K562 (cell line): ENCODE measurements at regions of chr12 and their contacts with region 1.

Region 1: GRCh38 chr12:102169922-102170621 is 27.6 kb downstream of the PMCH start:
- DNase-seq: peak; percentile 11 to 52 (median 26)
- ATAC-seq: peak; percentile 87
- H3K4me3 ChIP-seq: no peak overlapping the region
- H3K27ac ChIP-seq: no peak overlapping the region
- H3K4me1 ChIP-seq: peaks cover 0 to 9% of the 10 kb centered on the region in 2 experiments; a peak in 3 of 5 replicates
- H3K27me3 ChIP-seq: no peaks in the 10 kb centered on the region
- CTCF ChIP-seq: peak; percentile 43 to 78 (median 63); a peak in 4 of 6 replicates
- EP300 ChIP-seq: no peak
- POLR2A ChIP-seq: no peak
- RAD21 ChIP-seq: peak; percentile 81 to 84

Region 2: GRCh38 chr12:102300824-102301461 is 130.9 kb after region 1 on chr12:
- CTCF ChIA-PET with region 1: no interaction called
- POLR2A ChIA-PET with region 1: no interaction called
- in situ Hi-C with region 1: no loop called
- intact Hi-C with region 1: loop called (anchors 5 kb)
- DNase-seq: peak; percentile 27 to 71 (median 46)
- ATAC-seq: peak; percentile 99
- H3K4me3 ChIP-seq: no peak overlapping the region
- H3K27ac ChIP-seq: no peak overlapping the region
- H3K4me1 ChIP-seq: no peaks in the 10 kb centered on the region
- H3K27me3 ChIP-seq: no peaks in the 10 kb centered on the region
- CTCF ChIP-seq: peak; percentile 56 to 64 (median 59)
- EP300 ChIP-seq: no peak
- POLR2A ChIP-seq: no peak
- RAD21 ChIP-seq: peak; percentile 41 to 88; a peak in 3 of 4 replicates

Region 3: DNA sequence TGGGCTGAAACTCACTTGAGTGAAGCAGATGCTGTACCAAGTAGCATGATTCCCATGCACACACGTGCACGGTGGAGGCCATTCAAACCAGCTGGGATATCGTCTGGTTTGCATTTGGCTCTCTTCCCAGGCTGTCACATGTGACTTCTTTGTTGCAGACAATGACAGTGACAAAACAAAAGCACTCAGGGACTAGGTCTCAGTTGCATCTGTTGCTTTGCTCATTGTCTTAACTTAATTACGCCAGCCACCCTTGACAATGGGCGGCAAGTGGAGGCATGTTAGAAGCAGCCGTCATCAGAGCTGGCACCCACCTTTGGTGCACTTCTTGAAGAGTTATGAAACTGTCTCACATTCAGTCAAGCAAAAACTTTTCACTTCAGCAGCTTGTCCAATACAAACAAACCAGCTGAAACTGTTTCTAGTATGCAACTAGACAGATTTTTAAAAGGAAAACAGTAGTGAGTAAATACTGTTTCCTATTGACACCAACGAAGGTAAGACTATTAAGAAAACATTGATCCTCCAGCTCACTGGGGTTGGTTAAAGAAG is 236.0 kb after region 1 on chr12:
- CTCF ChIA-PET with region 1: no interaction called
- POLR2A ChIA-PET with region 1: no interaction called
- in situ Hi-C with region 1: no loop called
- intact Hi-C with region 1: loop called (anchors 10 kb)
- DNase-seq: peak in 2 of 4 experiments; percentile 42 to 71
- ATAC-seq: peak; percentile 85
- H3K4me3 ChIP-seq: no peak overlapping the region
- H3K27ac ChIP-seq: no peak overlapping the region
- H3K4me1 ChIP-seq: peaks cover 5 to 6% of the 10 kb centered on the region in 2 experiments; a peak in 4 of 5 replicates
- H3K27me3 ChIP-seq: no peaks in the 10 kb centered on the region
- CTCF ChIP-seq: no peak
- EP300 ChIP-seq: peak; percentile 40; the same call in 1 of the 2 replicates
- POLR2A ChIP-seq: no peak
- RAD21 ChIP-seq: no peak; a peak in 1 of 4 replicates

Region 4: DNA sequence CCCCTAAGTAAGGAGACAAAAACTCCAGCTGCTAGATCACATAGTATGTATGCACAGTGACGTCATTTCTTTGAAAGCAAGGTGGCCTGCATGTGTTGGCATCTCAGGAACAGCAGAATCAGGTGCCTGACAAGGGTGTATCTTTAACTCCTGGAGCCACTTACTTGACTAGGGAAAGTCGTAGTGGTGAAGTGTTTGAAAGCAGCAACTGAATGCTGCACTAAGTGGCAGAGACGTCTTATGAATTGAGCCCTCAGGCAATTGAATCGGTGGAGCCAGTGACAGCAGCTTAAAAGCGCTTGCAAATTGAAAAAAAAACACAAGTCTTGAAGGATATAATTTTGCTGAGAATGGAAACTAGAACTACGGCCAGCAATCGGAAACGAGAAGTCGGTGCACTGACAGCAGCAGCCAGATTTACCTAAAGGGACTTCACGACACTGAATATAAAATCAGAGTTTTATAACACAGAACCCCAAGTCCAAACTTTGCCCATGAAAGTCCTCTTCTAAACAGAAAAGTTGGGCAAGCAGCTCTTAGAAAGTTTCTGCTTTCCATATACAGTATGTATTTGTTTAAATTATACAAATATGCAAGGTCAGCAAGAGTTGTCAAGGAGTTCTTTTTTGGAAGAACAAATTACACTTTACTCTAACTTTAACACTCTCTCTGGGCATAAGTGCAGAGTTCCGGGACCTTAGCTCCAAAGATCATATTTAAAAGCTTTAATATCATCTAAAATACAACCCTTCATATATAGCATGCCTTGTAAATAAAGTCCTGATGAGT is 309.2 kb after region 1 on chr12:
- CTCF ChIA-PET with region 1: interaction called, 12 read pairs
- POLR2A ChIA-PET with region 1: no interaction called
- in situ Hi-C with region 1: no loop called
- intact Hi-C with region 1: loop called (anchors 2 kb)
- DNase-seq: peak in 1 of 4 experiments; percentile 37
- ATAC-seq: peak; percentile 12
- H3K4me3 ChIP-seq: peak overlapping the region; percentile 23
- H3K27ac ChIP-seq: peak overlapping the region; percentile 41; the same call in 1 of the 3 replicates
- H3K4me1 ChIP-seq: peaks cover 4 to 31% of the 10 kb centered on the region in 2 experiments; a peak in 4 of 5 replicates
- H3K27me3 ChIP-seq: no peaks in the 10 kb centered on the region
- CTCF ChIP-seq: no peak
- EP300 ChIP-seq: no peak
- POLR2A ChIP-seq: no peak
- RAD21 ChIP-seq: no peak

Region 5: GRCh38 chr12:102484428-102484958 is 314.4 kb after region 1 on chr12:
- CTCF ChIA-PET with region 1: interaction called, 12 read pairs
- POLR2A ChIA-PET with region 1: no interaction called
- in situ Hi-C with region 1: no loop called
- intact Hi-C with region 1: loop called (anchors 2 kb)
- DNase-seq: peak; percentile 64 to 73 (median 68)
- ATAC-seq: peak; percentile 68
- H3K4me3 ChIP-seq: no peak overlapping the region
- H3K27ac ChIP-seq: no peak overlapping the region
- H3K4me1 ChIP-seq: peaks cover 0 to 7% of the 10 kb centered on the region in 2 experiments; a peak in 3 of 5 replicates
- H3K27me3 ChIP-seq: no peaks in the 10 kb centered on the region
- CTCF ChIP-seq: peak; percentile 68 to 85 (median 82)
- EP300 ChIP-seq: no peak
- POLR2A ChIP-seq: no peak
- RAD21 ChIP-seq: peak; percentile 54 to 71

Region 6: GRCh38 chr12:102769319-102769916 is 599.3 kb after region 1 on chr12:
- CTCF ChIA-PET with region 1: interaction called, 5 read pairs
- POLR2A ChIA-PET with region 1: no interaction called
- in situ Hi-C with region 1: no loop called
- intact Hi-C with region 1: loop called (anchors 5 kb)
- DNase-seq: peak; percentile 45 to 57 (median 50)
- ATAC-seq: peak; percentile 96
- H3K4me3 ChIP-seq: no peak overlapping the region
- H3K27ac ChIP-seq: no peak overlapping the region
- H3K4me1 ChIP-seq: no peaks in the 10 kb centered on the region
- H3K27me3 ChIP-seq: peaks cover 0 to 3% of the 10 kb centered on the region in 2 experiments; a peak in 1 of 5 replicates
- CTCF ChIP-seq: peak; percentile 63 to 83 (median 68)
- EP300 ChIP-seq: no peak
- POLR2A ChIP-seq: no peak
- RAD21 ChIP-seq: peak; percentile 71 to 78

Region 7: DNA sequence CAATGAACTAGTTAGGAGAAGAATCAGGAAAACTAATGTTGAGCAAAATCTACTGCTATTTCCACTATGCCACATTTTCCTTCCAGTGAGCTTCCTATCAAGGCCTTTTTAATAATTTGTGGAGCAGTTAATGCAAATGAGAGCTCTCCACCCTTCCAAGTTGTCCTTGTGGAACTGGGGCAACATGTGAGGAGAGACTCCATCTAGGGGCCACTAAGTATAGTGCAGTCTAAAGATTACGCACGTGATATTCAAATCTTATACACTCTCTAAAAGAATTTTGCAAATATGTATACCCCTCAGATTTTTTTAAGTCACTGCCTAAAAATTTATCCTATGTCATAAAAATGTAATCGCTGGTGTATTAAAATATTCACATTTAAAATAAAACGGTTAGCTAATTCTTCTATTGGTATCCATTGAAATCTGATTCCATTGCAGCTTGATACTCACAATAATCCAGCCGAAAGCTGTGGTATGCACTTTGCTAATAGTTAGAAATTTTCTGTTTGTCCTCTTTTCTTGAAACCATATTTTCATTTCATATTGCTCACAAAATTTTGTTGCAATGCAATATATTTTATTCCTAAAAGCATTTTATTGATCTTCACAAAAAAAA is 646.9 kb after region 1 on chr12:
- CTCF ChIA-PET with region 1: no interaction called
- POLR2A ChIA-PET with region 1: no interaction called
- in situ Hi-C with region 1: no loop called
- intact Hi-C with region 1: loop called (anchors 10 kb)
- DNase-seq: peak; percentile 35 to 57 (median 44)
- ATAC-seq: peak; percentile 93
- H3K4me3 ChIP-seq: no peak overlapping the region
- H3K27ac ChIP-seq: no peak overlapping the region
- H3K4me1 ChIP-seq: no peaks in the 10 kb centered on the region
- H3K27me3 ChIP-seq: no peaks in the 10 kb centered on the region
- CTCF ChIP-seq: peak; percentile 47 to 68 (median 64); a peak in 5 of 6 replicates
- EP300 ChIP-seq: no peak
- POLR2A ChIP-seq: no peak
- RAD21 ChIP-seq: peak in 1 of 2 experiments; percentile 44; a peak in 3 of 4 replicates